ENCODE measurements at regions of chr9 and their contacts with region 1.

Region 1: GRCh38 chr9:93453047-93453914 is at the start of gene FAM120AOS:
- DNase-seq: peak; percentile 95
- H3K4me3 Mint-ChIP-seq: peak within 1 kb of the TSS; percentile 92
- H3K27ac Mint-ChIP-seq: peak within 1 kb of the TSS; percentile 94
- H3K4me1 Mint-ChIP-seq: peaks cover 41% of the 10 kb centered on the region
- H3K27me3 Mint-ChIP-seq: no peaks in the 10 kb centered on the region
- total RNA-seq, gene FAM120AOS: 31.6 and 33.9 TPM in 2 replicates

Region 2: DNA sequence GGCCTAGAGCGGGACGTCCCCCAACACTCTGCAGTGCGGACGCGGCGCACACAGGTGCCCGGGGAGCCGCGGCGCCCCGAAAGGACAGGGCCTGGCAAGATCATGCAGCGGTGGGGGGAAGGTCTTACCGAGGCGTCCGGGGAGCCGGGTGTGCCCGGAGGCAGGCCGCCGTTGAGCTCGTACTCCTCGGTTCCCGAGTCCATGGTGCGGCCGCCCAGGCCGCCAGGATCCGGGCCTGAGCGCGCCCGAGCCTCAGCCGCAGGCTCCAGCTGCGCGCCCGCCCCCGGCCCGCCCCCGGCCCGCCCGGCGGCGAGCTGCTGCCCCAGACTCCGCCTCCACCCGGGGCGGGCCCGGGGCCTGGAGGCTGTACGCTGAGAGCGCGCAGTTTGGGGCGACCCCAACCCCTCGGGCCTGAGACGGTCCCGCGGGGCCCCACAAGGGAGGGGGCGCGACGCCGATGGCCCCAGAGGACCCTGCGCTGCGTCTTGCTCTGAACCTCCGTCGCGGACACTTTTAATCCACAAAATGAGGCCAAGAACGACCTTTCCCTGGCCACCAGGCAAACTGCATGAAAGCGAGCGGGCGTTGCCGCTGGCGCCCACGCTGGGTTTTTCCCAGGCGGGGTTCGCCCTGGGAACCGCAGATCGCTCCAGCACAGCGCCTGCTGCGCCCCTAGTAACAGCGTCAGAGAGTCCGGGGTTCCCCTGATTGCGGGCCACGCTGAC is 319.1 kb before region 1 on chr9 and contains the start of gene NINJ1:
- intact Hi-C with region 1: loop called (anchors 1 kb)
- DNase-seq: peak; percentile 97
- H3K4me3 Mint-ChIP-seq: peak within 1 kb of the TSS; percentile 93
- H3K27ac Mint-ChIP-seq: peak within 1 kb of the TSS; percentile 97
- H3K4me1 Mint-ChIP-seq: peaks cover 60% of the 10 kb centered on the region
- H3K27me3 Mint-ChIP-seq: no peaks in the 10 kb centered on the region
- total RNA-seq, gene NINJ1: 103 and 110 TPM in 2 replicates

Region 3: DNA sequence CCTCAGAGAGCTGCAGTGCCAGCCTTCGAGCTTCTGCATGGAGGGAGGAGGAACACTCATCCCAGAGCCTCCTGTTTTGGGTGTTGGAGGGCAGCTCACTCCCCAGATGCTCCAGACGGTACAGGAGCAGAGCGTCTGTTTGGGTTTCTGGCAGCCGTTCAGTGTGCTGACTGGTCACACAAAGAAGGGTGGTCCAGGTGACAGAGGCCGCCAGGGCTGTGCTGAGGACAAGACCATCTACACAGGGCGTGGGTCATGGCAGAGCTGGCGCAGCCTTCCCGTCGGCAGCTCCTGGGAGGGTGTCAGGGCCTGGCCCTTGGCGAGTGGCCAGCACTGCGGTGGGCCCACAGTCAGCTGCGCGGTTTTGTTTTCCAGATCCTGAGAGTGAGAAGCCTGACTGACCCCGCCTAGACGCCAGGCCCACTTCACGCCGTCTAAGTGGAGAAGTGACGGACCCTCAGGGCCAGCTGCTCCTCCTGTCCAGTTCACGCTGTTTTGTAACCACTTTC is 133.2 kb before region 1 on chr9:
- intact Hi-C with region 1: no loop called
- DNase-seq: no peak
- H3K4me3 Mint-ChIP-seq: no peak overlapping the region
- H3K27ac Mint-ChIP-seq: no peak overlapping the region
- H3K4me1 Mint-ChIP-seq: peaks cover 3% of the 10 kb centered on the region
- H3K27me3 Mint-ChIP-seq: peaks cover 19% of the 10 kb centered on the region

Region 4: DNA sequence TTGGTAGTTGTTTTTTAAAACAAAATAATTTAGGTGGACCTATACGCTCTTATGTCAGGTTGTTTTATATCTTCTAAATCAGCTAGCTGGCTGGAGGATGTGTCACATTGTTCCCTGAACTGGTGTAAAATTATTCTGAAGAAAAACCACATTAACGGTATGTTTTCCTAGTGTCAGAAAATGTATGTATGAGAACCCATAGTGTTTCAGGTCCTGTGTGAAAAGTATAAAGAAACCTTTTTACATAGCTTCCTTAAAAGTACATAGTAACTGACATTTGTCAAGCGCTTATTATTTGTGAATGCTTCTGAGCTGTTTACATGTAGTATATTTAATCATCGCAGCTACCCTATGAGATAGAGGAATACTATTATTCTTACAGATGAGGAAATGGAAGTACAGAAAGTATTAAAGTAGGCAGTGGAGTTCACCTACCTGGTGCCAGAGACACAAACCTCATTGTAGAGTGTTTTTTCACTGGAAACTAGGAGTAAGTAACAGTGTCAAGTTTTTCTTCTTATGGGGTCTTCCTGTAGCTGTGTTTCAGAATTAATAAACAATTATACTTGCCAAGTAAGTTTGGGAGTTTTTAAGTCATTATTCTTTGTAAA is 10.5 kb after region 1 on chr9:
- intact Hi-C with region 1: loop called (anchors 1 kb)
- DNase-seq: no peak
- H3K4me3 Mint-ChIP-seq: peak overlapping the region; percentile 80
- H3K27ac Mint-ChIP-seq: peak overlapping the region; percentile 91
- H3K4me1 Mint-ChIP-seq: peaks cover 83% of the 10 kb centered on the region
- H3K27me3 Mint-ChIP-seq: no peaks in the 10 kb centered on the region

Region 5: DNA sequence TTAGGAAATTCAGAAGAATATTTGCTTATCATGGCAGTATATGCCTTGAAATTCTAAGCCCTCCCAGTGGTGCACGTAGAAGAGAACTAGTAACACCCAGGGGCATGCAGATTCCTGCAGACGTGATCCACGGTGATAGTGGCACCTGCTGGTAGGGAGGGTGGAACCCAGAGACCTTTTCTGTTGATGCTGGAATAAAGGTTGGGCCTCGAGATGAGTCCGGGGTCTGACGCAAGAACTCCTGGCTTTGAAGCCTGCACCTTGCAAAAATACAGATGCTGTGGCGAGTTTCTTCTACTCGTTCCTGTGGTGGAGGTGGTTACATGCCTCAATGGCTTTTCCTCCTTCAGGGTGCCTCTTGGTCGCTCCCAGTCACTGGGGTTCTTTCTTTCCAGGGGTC is 83.6 kb after region 1 on chr9:
- intact Hi-C with region 1: no loop called
- DNase-seq: no peak
- H3K4me3 Mint-ChIP-seq: no peak overlapping the region
- H3K27ac Mint-ChIP-seq: no peak overlapping the region
- H3K4me1 Mint-ChIP-seq: peaks cover 15% of the 10 kb centered on the region
- H3K27me3 Mint-ChIP-seq: no peaks in the 10 kb centered on the region

Region 6: DNA sequence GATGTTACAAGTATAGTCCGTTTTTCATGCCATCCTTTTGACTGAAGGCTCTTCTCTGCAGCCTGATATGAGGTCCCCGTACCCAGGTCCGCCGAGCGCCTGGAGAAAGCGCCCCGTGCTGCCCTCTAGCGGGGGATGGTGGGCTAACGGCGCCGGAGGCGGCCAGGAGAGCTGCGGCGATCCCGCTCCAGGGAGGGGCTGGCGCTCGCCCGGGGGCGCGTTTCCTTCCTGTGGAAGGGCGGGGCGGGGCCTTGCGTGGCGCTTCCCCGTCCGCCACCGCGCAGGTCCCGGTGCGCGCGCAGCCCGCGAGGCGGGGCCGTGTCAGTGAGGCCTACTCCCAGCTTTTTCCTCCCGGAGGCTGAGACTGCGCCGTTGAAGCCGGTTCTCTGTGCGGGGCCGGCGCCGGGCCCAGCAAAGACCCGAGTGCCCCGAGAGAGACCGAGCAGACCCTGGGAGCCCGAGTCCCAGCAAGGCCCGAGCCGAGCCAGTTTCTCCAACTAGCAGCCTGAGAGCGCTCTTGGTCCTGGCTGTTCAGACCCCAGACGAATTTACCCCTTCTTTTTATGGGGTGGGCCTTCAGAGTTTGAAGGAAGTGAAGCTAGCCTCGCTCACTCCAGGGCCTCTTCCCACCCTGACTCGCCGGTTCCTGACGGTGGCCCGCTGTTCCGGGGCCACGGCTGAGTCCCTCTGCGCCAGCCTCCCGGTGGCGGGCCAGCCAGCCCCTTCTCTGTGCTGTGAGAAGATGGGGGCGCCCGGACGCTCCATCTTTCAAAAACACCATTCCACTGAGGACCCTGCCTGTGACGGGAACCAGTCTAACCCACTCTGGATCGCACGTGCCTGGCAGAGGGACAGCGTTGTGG is 113.4 kb after region 1 on chr9:
- intact Hi-C with region 1: loop called (anchors 1 kb)
- DNase-seq: peak; percentile 100
- H3K4me3 Mint-ChIP-seq: peak overlapping the region; percentile 89
- H3K27ac Mint-ChIP-seq: peak overlapping the region; percentile 93
- H3K4me1 Mint-ChIP-seq: peaks cover 20% of the 10 kb centered on the region
- H3K27me3 Mint-ChIP-seq: no peaks in the 10 kb centered on the region

Measured in activated CD4-positive, alpha-beta T cell treated with anti-CD3 and anti-CD28 coated beads, Interleukin-2, amount 10 ng/mL, durations not matched to agents 24 days and 14 days (primary cell).